ENCODE measurements at regions of chr11 and their contacts with region 1.

Region 1: DNA sequence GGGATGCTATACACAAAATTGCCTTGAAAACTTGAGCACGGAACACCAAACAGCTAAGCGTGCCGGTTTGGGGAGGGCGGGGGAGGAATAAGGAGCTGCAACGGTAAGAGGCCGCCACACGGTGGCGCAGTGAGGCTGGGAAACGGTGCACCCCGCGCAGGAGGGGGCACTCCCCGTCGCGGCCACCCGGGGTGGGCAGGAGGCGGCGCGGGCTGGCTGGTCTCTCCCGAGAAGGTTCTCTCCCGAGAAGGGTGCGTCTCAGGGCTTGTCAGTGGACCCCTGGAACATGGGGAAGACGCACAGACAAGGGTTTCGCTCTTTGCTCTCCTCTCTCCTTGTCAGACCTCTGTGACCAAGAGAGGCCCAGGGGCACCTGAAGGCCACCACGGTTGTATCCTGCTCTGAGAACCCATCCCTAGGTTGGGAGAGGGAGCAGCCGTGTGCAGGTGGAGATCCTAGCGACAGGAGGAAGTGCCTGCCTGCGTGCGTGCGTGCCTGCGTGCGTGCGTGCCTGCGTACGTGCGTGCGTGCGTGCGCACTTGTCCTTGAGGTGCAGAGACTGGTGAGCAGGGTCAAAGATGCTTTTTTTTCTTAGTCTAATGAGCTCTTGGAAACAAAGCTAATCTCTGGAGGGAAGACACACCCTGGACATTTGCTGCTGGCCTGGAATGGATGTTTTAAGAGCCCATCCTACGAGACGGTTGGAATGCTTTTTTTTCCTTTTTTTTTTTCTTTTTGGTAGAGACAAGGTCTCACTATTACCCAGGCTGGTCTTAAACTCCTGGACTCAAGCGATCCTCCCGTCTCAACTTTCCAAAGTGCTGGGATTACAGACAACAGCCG is 18.1 kb upstream of the JAM3 start:
- DNase-seq: peak in 1 of 2 donors; percentile 85
- H3K4me3 ChIP-seq: peak overlapping the region; percentile 40 to 41
- H3K27ac ChIP-seq: no peak overlapping the region
- H3K4me1 ChIP-seq: peaks cover 4 to 17% of the 10 kb centered on the region in 2 donors
- H3K27me3 ChIP-seq: no peaks in the 10 kb centered on the region
- CTCF ChIP-seq: peak; percentile 93 to 97 (median 95)

Region 2: GRCh38 chr11:133951327-133952198 is 99.2 kb before region 1 on chr11:
- intact Hi-C with region 1: loop called (anchors 1 kb)
- DNase-seq: peak in 1 of 2 donors; percentile 78
- H3K4me3 ChIP-seq: peak overlapping the region; percentile 31 to 86
- H3K27ac ChIP-seq: peak overlapping the region; percentile 75 to 93
- H3K4me1 ChIP-seq: peaks cover 26 to 73% of the 10 kb centered on the region in 2 donors
- H3K27me3 ChIP-seq: no peaks in the 10 kb centered on the region
- CTCF ChIP-seq: no peak

Region 3: GRCh38 chr11:134068829-134069425 is 18.2 kb after region 1 on chr11 and contains the start of gene JAM3:
- intact Hi-C with region 1: loop called (anchors 1 kb)
- DNase-seq: peak; percentile 81 to 99
- H3K4me3 ChIP-seq: peak within 1 kb of the TSS; percentile 82 to 84
- H3K27ac ChIP-seq: peak within 1 kb of the TSS; percentile 95
- H3K4me1 ChIP-seq: peaks cover 0 to 10% of the 10 kb centered on the region in 2 donors
- H3K27me3 ChIP-seq: no peaks in the 10 kb centered on the region
- CTCF ChIP-seq: no peak
- total RNA-seq, gene JAM3: 59.8 TPM

Region 4: GRCh38 chr11:134139873-134140331 is 89.1 kb after region 1 on chr11:
- intact Hi-C with region 1: loop called (anchors 1 kb)
- DNase-seq: peak in 1 of 2 donors; percentile 84
- H3K4me3 ChIP-seq: peak overlapping the region in 1 of 2 donors; percentile 21
- H3K27ac ChIP-seq: peak overlapping the region; percentile 64 to 84
- H3K4me1 ChIP-seq: peaks cover 0 to 10% of the 10 kb centered on the region in 2 donors
- H3K27me3 ChIP-seq: no peaks in the 10 kb centered on the region
- CTCF ChIP-seq: peak; percentile 74 to 90 (median 88)